Caco-2 (cell line): ENCODE measurements at regions of chr4 and their contacts with region 1.

Region 1: DNA sequence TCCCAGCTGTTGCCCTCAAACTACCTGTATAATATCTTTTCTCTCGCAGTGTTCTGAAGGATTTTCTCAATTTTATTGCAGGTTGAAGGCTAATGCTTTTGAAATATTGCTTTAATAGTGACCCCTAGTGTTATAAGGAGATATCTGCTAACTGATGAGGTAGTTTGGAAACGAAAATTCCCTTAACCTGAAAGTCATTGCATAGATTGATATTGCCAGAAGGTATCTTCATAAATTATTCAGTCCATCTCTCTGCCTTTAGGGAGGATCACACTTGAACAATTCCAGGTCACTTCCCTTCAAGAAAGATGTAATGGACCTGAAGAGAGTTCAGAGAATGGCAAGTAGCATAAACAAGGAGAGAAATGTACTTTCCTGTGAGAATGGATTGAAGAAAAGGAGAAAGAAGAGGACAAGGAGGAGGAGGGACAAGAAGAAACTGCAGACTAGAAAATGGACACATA is 44.1 kb downstream of the TIGD4 start:
- DNase-seq: no peak
- H3K4me3 ChIP-seq: no peak overlapping the region
- H3K4me3 Mint-ChIP-seq: no peak overlapping the region
- H3K27ac Mint-ChIP-seq: no peak overlapping the region
- H3K4me1 ChIP-seq: 0 out of 2 replicates have a peak, but pooled peaks cover 4% of the 10 kb centered on the region
- H3K4me1 Mint-ChIP-seq: peaks cover 9% of the 10 kb centered on the region
- H3K27me3 ChIP-seq: no peaks in the 10 kb centered on the region
- H3K27me3 Mint-ChIP-seq: no peaks in the 10 kb centered on the region
- CTCF ChIP-seq: peak; percentile 45 to 47

Region 2: DNA sequence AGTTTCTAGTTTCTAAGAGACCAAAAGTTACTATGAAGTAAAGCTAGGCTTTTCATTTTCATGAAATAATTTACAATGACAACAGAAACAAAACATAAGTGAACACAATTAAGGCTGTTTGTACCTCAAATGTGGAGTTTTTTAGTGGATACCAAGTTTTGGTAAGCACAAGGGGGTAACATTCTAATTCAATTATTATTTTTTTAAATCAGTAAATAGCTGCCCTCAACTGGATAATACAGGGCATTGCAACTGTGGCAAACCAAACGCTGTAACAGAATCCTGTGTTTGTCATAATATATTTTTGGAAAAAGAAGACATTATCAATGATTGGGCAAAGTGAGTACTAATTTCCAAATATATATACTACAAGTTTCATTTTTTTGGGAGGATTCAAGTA is 349.9 kb before region 1 on chr4:
- CTCF ChIA-PET with region 1: no interaction called
- POLR2A ChIA-PET with region 1: no interaction called
- intact Hi-C with region 1: no loop called
- DNase-seq: no peak
- H3K4me3 ChIP-seq: no peak overlapping the region
- H3K4me3 Mint-ChIP-seq: no peak overlapping the region
- H3K27ac Mint-ChIP-seq: no peak overlapping the region
- H3K4me1 ChIP-seq: no peaks in the 10 kb centered on the region
- H3K4me1 Mint-ChIP-seq: no peaks in the 10 kb centered on the region
- H3K27me3 ChIP-seq: no peaks in the 10 kb centered on the region
- H3K27me3 Mint-ChIP-seq: no peaks in the 10 kb centered on the region
- CTCF ChIP-seq: peak; percentile 41 to 49

Region 3: DNA sequence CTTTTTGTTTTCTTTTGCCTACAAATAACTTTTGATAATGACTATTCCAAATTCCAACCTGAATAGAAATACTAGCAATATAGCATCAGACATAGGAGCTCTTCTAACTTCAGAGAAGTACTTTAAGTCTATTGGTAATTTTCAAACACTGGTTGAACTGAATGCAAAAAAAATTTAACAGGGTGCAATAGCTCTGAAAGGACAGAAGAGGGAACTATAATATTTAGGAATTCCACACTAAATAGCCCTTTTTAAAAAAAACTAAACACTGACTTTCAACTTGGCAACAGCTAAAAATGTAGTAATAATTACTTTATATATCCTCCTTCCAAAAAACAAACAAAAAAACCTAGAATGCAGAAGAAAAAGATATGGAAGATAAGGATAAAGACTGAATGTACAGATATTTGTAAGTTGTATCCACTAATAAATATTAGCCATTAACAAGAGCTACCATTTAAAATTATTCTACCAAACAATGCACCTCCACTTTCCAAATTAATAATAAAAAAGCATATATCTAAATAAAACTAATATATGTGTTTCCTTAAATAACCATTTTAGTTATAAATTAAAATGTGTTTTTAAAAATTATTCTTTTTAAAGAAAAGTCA is 280.9 kb before region 1 on chr4:
- CTCF ChIA-PET with region 1: no interaction called
- POLR2A ChIA-PET with region 1: no interaction called
- intact Hi-C with region 1: loop called (anchors 1 kb)
- DNase-seq: no peak
- H3K4me3 ChIP-seq: no peak overlapping the region
- H3K4me3 Mint-ChIP-seq: no peak overlapping the region
- H3K27ac Mint-ChIP-seq: no peak overlapping the region
- H3K4me1 ChIP-seq: peaks cover 6% of the 10 kb centered on the region; the same call in 1 of the 2 replicates
- H3K4me1 Mint-ChIP-seq: peaks cover 20% of the 10 kb centered on the region
- H3K27me3 ChIP-seq: no peaks in the 10 kb centered on the region
- H3K27me3 Mint-ChIP-seq: no peaks in the 10 kb centered on the region
- CTCF ChIP-seq: peak; percentile 31 to 57

Region 4: DNA sequence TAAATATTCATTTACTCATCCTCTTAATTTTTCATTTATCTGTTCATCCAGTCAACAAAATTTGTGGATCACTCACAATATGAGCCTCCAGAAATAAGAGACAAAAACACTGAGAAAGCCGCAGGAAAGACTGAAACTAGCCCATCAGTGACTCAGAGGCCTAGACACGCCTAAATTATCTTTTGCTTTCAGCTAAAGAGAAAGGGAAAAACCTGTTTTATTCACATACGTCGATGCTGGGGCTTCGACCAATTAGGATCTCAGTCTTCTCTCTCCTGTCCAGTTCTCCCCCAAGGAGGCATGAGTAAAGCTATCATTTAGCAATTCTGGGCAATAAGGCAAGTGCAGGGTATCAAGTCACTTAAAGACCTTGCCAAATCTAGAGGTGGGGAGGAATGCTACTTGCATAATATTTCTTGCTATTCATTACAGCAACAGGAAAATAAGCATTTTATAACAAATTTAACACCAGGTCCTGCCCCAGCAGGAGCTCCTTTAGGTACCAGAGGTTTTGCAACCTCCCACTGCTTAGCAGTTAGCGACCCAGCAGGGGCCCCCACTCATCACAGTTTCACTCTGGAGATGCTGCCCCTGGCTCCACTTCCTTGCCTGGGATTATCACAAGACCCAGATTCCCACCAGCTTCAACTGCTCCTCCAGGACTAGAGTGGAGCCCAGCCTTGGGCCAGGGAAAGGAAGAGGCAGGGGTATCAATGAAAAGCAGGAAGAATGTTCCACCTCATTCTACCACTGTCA is 25.6 kb before region 1 on chr4:
- CTCF ChIA-PET with region 1: no interaction called
- POLR2A ChIA-PET with region 1: no interaction called
- intact Hi-C with region 1: no loop called
- DNase-seq: no peak
- H3K4me3 ChIP-seq: no peak overlapping the region
- H3K4me3 Mint-ChIP-seq: no peak overlapping the region
- H3K27ac Mint-ChIP-seq: no peak overlapping the region
- H3K4me1 ChIP-seq: 0 out of 2 replicates have a peak, but pooled peaks cover 5% of the 10 kb centered on the region
- H3K4me1 Mint-ChIP-seq: peaks cover 12% of the 10 kb centered on the region
- H3K27me3 ChIP-seq: no peaks in the 10 kb centered on the region
- H3K27me3 Mint-ChIP-seq: no peaks in the 10 kb centered on the region
- CTCF ChIP-seq: no peak